T-cell (primary cell): ENCODE measurements at regions of chr7 and their contacts with region 1.

Region 1: DNA sequence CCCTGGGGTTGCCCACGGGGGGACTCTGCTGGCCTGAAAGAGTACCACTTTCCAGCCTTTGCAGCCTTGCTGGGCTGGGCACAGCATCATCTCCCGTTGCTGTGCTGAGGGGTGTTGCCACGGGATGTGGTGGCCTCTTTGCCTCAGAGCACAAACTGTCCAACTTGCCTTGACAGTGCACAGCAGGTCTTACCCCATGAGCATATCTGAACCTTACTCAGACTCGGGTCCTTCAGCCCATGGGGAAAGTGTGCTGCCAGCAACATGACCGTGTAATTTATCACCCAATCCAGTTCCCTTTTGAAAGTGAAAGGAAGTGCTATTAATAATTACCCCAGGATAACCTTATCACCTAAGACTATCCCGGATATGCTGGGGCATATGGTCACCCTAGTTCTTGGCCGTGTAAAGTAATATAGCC is 46.8 kb downstream of the TBXAS1 start:
- DNase-seq: peak in 2 of 35 experiments; percentile 7 to 17
- ATAC-seq: no peak
- H3K4me3 ChIP-seq: no peak overlapping the region
- H3K4me3 Mint-ChIP-seq: no peak overlapping the region
- H3K27ac ChIP-seq: no peak overlapping the region
- H3K27ac Mint-ChIP-seq: no peak overlapping the region
- H3K4me1 ChIP-seq: no peaks in the 10 kb centered on the region
- H3K4me1 Mint-ChIP-seq: peaks cover 0 to 4% (median 0%) of the 10 kb centered on the region in 3 donors
- H3K27me3 ChIP-seq: no peaks in the 10 kb centered on the region
- H3K27me3 Mint-ChIP-seq: no peaks in the 10 kb centered on the region

Region 2: GRCh38 chr7:140501966-140502365 is 626.1 kb after region 1 on chr7:
- CTCF ChIA-PET with region 1: no interaction called
- POLR2A ChIA-PET with region 1: interaction called in 1 of 2 experiments, 10 read pairs
- DNase-seq: no peak
- ATAC-seq: no peak
- H3K4me3 ChIP-seq: no peak overlapping the region
- H3K4me3 Mint-ChIP-seq: no peak overlapping the region
- H3K27ac ChIP-seq: no peak overlapping the region
- H3K27ac Mint-ChIP-seq: no peak overlapping the region
- H3K4me1 ChIP-seq: no peaks in the 10 kb centered on the region
- H3K4me1 Mint-ChIP-seq: no peaks in the 10 kb centered on the region
- H3K27me3 ChIP-seq: peaks cover 0 to 3% of the 10 kb centered on the region in 2 experiments
- H3K27me3 Mint-ChIP-seq: no peaks in the 10 kb centered on the region